HEK293T (cell line): ENCODE measurements at regions of chr6 and their contacts with region 1.

Region 1: GRCh38 chr6:53794720-53795253 is at the start of gene LRRC1:
- DNase-seq: peak; percentile 91

Region 2: DNA sequence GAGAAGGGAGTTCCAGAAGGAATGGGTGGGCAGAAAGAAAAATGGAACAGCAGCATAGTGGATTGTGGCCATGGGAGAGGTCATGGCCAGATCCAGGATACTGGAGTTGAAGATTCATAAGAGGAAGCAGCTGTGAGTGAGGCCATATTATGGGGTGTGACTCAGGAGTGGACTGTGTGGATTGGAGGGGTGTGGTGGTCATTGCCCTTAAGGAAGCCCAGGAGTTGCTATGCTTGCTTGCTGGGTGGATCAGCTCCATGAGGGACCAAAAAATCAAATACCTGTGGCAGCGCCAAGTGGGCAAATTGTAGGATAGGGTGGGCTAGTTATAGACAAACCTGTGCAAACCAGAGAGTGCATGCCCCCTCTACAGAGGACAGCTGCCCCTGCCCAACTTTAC is 18.3 kb after region 1 on chr6:
- CTCF ChIA-PET with region 1: no interaction called
- POLR2A ChIA-PET with region 1: interaction called, 15 read pairs
- DNase-seq: no peak

Region 3: DNA sequence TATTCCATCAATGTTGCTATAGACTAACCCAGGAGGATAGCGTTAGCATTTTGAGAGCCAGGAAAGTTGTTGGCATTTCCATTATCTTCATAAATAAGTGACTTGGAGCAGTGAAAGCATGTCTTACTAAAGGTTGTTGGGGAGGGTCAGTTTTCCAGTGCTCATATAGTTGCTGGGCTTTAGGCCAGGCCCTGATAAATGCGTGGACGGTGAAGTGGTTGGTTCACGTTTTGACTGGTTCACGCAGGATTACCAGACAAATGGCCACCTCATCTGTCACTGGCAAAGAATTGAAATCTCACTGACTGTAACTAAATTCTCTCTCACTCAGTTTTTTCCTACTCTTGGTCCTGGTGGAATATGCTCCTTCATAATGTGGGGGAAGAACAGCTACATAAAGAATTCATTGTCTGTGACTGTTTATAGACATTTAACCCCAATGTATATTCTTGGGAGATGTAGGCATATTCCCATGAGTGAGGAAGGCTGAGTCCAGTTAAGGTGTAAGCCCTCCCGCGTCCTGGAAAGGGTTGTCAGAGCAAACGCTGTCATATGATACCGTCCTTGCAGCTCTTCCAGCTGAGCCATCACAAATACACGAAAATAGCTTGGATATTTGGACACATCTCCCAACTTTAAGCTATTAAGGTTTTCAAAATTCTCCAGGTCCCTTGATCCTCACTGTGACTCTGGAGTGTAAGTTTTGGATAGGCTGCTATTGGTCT is 27.8 kb after region 1 on chr6:
- CTCF ChIA-PET with region 1: no interaction called
- POLR2A ChIA-PET with region 1: interaction called, 10 read pairs
- DNase-seq: no peak